ENCODE measurements at regions of chr19 and their contacts with region 1.

Region 1: DNA sequence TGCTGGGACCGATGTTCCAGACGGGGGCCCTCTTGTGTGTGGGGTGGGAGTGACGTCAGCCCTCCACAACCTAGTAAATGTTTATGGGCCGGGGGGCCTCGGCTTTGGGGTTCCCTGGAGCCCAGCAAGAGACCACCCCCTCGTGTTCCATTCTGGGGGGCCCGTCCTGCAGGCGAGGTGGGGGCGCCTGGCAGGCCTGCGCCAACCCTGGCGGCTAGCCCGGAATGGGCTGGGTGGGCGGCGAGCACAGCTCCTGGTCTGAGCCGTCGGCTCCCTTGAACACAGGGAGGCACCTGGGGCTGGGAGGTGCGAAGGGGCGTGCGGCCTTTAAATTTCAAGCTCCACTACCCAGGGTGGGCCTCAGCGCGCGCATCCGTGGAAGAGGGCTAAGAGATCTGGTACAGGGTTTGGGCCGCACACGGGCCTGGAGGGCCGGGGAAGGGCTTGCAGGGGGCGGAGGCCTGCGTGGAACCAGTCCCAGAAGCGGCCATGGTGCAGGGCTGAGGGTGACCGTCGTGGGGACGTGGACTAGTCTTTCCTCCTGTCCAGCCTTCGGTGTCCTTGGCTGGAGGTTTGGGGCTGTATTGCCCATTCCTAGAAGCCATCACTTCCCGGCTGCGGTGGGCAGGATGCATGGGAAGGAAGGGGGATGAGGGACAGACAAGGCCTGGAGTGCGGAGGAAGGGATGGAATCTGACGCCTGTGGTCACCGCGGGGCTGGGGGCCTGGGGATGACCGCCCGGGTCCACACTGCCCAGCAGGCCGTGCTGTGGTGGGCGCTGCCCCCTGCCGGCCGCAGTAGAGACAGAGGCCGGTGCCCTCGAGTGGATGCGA is 11.4 kb downstream of the NDUFA11 start:
- DNase-seq: peak in 2 of 3 donors; percentile 83
- ATAC-seq: peak; percentile 39 to 44
- H3K4me3 ChIP-seq: no peak overlapping the region
- H3K27ac ChIP-seq: peak overlapping the region; percentile 22
- H3K4me1 ChIP-seq: peaks cover 6% of the 10 kb centered on the region
- H3K27me3 ChIP-seq: no peaks in the 10 kb centered on the region

Region 2: GRCh38 chr19:5803752-5804515 is 88.2 kb before region 1 on chr19:
- intact Hi-C with region 1: loop called (anchors 2 to 10 kb)
- DNase-seq: peak; percentile 89 to 96 (median 95)
- ATAC-seq: peak; percentile 85
- H3K4me3 ChIP-seq: peak overlapping the region; percentile 15
- H3K27ac ChIP-seq: no peak overlapping the region
- H3K4me1 ChIP-seq: no peaks in the 10 kb centered on the region
- H3K27me3 ChIP-seq: no peaks in the 10 kb centered on the region

Region 3: DNA sequence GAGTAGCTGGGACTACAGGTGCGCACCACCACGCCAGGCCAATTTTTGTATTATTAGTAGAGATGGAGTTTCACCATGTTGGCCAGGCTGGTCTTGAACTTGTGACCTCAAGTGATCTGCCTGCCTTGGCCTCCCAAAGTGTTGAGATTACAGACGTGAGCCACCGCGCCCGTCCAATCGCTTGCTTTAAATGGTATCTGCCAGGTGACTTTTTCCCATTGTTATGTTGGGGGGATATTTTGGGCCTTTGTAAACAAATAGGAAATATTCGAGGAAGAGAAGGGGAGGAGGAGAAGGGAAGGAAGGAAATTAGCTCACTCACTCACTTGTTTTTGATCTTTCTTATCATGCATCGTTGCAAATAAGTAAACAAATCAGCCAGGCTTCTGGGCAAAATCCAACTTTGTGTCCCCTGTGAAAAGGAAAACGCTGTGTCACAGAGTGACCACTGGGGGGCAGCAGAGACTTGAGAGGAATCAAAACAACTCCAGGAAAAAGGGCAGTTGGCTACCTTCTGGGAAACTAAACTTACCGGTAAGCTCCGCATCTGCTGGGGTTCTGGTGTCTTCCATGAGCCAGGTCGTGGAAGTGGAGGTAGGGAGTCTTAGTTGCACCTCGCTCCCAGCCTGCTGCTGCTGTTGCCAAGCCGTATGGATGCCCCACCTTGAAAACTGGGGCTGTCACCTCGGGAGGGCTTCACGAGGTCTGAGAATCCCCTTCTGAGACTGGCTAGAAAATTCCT is 95.1 kb after region 1 on chr19:
- intact Hi-C with region 1: no loop called
- DNase-seq: peak; percentile 70 to 84 (median 80)
- ATAC-seq: peak; percentile 33 to 54
- H3K4me3 ChIP-seq: peak overlapping the region; percentile 32
- H3K27ac ChIP-seq: no peak overlapping the region
- H3K4me1 ChIP-seq: peaks cover 3% of the 10 kb centered on the region
- H3K27me3 ChIP-seq: no peaks in the 10 kb centered on the region

Measured in right cardiac atrium (tissue), 5 donors.